Breast epithelium (tissue), 4 donors: ENCODE measurements at regions of chr2 and their contacts with region 1.

Region 1: DNA sequence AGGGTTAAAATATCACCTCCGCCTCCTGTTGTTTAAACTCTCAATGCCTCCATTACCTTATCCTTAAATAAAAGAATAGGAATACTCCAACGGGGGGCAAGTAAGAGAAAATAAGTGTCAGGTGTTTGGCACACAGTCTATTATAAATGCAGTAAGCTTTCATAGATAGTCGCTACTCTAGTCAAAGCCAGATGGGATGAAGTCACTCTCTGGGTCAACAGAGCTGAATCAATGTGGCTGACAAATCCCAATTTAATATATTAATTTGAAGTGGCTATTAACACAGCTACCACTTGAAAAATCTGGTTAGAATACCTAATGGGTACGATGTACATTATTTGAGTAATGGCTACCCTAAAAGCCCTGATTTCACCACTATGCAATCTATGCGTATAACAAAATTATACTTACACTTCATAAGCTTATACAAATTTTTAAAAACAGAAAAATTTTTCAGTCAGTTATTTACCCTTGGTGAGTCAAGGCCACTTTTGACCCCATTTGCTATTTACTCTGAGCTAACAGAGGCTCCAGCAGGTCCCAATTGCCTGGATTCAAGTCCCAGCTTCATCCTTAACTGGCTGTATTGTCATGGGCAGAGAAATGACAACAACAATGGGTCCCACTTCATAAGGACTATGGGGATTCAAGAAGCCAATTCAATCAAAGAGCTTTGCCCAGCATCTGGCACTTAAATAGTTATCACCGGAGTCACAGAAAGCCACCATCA is 167.5 kb upstream of the PID1 start:
- DNase-seq: no peak
- H3K4me3 ChIP-seq: no peak overlapping the region
- H3K27ac ChIP-seq: no peak overlapping the region
- H3K4me1 ChIP-seq: no peaks in the 10 kb centered on the region
- H3K27me3 ChIP-seq: no peaks in the 10 kb centered on the region
- CTCF ChIP-seq: no peak
- POLR2A ChIP-seq: no peak

Region 2: DNA sequence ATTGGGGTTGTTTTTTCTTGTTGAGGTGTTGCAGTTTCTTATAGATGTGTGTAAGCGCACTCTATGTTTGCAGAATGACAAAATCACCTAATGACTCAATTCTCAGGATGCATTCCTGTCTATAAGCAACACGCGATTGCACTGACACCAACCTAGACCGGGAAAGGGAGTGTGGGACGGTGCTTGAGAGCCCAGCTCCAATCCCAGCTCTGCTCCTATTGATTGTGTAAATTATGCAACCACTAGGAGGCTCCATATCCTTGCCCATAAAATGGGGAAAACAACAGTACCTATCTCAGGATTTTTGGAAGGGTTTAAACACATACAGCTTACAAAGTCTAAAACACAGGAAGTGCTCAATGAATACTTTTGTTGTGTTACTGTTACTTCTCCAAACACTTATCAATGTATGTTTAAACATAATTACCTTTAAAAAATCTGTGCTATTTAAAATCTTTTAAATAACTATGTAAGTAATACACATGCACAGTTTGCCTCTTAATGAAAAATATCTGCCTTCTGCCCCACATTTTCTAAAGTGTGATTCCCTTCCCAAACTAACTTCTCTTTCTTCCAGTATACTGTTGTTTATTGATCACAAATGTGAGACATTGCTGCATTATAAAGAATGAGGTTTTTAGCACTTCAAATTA is 1389.6 kb before region 1 on chr2:
- intact Hi-C with region 1: loop called (anchors 5 kb)
- DNase-seq: no peak
- H3K4me3 ChIP-seq: no peak overlapping the region
- H3K27ac ChIP-seq: no peak overlapping the region
- H3K4me1 ChIP-seq: no peaks in the 10 kb centered on the region
- H3K27me3 ChIP-seq: no peaks in the 10 kb centered on the region
- CTCF ChIP-seq: peak in 2 of 3 donors; percentile 19 to 20
- POLR2A ChIP-seq: no peak

Region 3: GRCh38 chr2:229174794-229175496 is 263.6 kb before region 1 on chr2:
- intact Hi-C with region 1: no loop called
- DNase-seq: no peak
- H3K4me3 ChIP-seq: no peak overlapping the region
- H3K27ac ChIP-seq: peak overlapping the region in 1 of 2 donors; percentile 53
- H3K4me1 ChIP-seq: no peaks in the 10 kb centered on the region
- H3K27me3 ChIP-seq: no peaks in the 10 kb centered on the region
- CTCF ChIP-seq: no peak
- POLR2A ChIP-seq: no peak